ENCODE measurements at regions of chr16 and their contacts with region 1.

Region 1: GRCh38 chr16:77971306-77972271 is 50.8 kb upstream of the CLEC3A start:
- DNase-seq: peak; percentile 82 to 95
- H3K4me3 ChIP-seq: no peak overlapping the region
- H3K27ac ChIP-seq: no peak overlapping the region
- H3K4me1 ChIP-seq: peaks cover 5 to 10% (median 7%) of the 10 kb centered on the region in 4 experiments; a peak in 6 of 7 replicates
- H3K27me3 ChIP-seq: no peaks in the 10 kb centered on the region
- CTCF ChIP-seq: peak; percentile 72 to 91 (median 88)
- EP300 ChIP-seq: no peak
- POLR2A ChIP-seq: no peak
- RAD21 ChIP-seq: peak; percentile 96 to 97

Region 2: GRCh38 chr16:77675464-77676324 is 295.9 kb before region 1 on chr16:
- CTCF ChIA-PET with region 1: interaction called, 27 read pairs
- POLR2A ChIA-PET with region 1: no interaction called
- DNase-seq: peak; percentile 29 to 87
- H3K4me3 ChIP-seq: no peak overlapping the region
- H3K27ac ChIP-seq: no peak overlapping the region
- H3K4me1 ChIP-seq: no peaks in the 10 kb centered on the region; a peak in 1 of 7 replicates
- H3K27me3 ChIP-seq: peaks cover 0 to 1% (median 0%) of the 10 kb centered on the region in 4 experiments; a peak in 1 of 7 replicates
- CTCF ChIP-seq: peak; percentile 44 to 95 (median 91)
- EP300 ChIP-seq: no peak
- POLR2A ChIP-seq: no peak
- RAD21 ChIP-seq: peak; percentile 99 to 100

Region 3: GRCh38 chr16:77951775-77952174 is 19.8 kb before region 1 on chr16:
- CTCF ChIA-PET with region 1: interaction called, 362 read pairs
- POLR2A ChIA-PET with region 1: interaction called, 11 read pairs
- DNase-seq: no peak
- H3K4me3 ChIP-seq: no peak overlapping the region
- H3K27ac ChIP-seq: no peak overlapping the region
- H3K4me1 ChIP-seq: peaks cover 0 to 9% (median 7%) of the 10 kb centered on the region in 4 experiments; a peak in 5 of 7 replicates
- H3K27me3 ChIP-seq: no peaks in the 10 kb centered on the region
- CTCF ChIP-seq: peak in 2 of 3 experiments; percentile 50 to 62; a peak in 3 of 4 replicates
- EP300 ChIP-seq: no peak
- POLR2A ChIP-seq: no peak
- RAD21 ChIP-seq: peak; percentile 70 to 72

Region 4: GRCh38 chr16:77987810-77988209 is 16.2 kb after region 1 on chr16:
- CTCF ChIA-PET with region 1: interaction called, 33 read pairs
- POLR2A ChIA-PET with region 1: interaction called, 14 read pairs
- DNase-seq: no peak
- H3K4me3 ChIP-seq: no peak overlapping the region
- H3K27ac ChIP-seq: no peak overlapping the region
- H3K4me1 ChIP-seq: peaks cover 2 to 11% (median 9%) of the 10 kb centered on the region in 4 experiments; a peak in 6 of 7 replicates
- H3K27me3 ChIP-seq: no peaks in the 10 kb centered on the region
- CTCF ChIP-seq: no peak
- EP300 ChIP-seq: no peak
- POLR2A ChIP-seq: no peak
- RAD21 ChIP-seq: no peak

Region 5: DNA sequence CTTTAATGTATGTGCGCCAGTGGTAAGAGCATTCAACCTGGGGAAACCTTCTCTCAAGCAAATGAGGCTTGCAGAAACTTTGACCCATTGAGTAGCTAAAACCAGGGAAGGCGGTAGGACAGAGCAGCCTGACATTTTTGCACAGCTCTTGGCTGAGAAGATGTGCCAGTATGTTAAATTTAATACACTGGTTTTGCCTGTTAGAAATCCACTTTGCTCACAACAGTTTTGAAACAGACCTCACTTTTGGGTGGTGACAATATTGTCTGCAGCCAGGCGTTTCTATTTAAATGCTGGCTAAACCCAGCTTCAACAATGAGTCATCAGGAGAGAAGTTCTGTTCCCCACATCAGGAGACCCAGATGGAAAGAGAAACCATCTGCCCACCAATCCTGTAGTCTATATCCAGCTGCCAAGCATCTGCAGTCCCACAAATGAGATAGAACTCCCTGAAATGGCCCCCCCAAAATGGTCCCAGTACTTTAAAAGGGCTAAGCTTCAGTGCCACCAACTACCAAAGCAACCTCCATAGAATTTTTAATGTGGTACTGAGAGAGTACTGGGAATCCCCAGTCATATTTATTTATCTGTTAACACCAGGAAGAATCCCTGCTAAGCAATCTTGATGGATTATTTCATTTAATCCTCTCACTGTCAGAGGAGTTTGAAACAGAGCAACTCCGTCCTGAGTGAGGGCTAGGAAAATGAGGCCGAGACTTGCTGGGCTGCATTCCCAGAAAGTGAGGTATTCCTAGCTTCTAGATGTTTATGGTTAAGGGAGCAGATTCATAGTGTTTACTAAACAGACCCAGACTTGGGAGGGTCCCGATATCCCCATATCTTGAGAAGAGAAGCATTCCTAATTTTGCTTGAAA is 21.8 kb after region 1 on chr16:
- CTCF ChIA-PET with region 1: interaction called, 218 read pairs
- POLR2A ChIA-PET with region 1: interaction called, 14 read pairs
- DNase-seq: no peak
- H3K4me3 ChIP-seq: no peak overlapping the region
- H3K27ac ChIP-seq: peak overlapping the region; percentile 71
- H3K4me1 ChIP-seq: peaks cover 4 to 22% (median 15%) of the 10 kb centered on the region in 4 experiments; a peak in 6 of 7 replicates
- H3K27me3 ChIP-seq: no peaks in the 10 kb centered on the region
- CTCF ChIP-seq: no peak
- EP300 ChIP-seq: no peak
- POLR2A ChIP-seq: no peak; a peak in 1 of 3 replicates
- RAD21 ChIP-seq: no peak

Measured in H1 (cell line).